Activated B cell treated with CpG ODN at 0.5 μM for 24 hours (primary cell): ENCODE measurements at regions of chr1 and their contacts with region 1.

Region 1: DNA sequence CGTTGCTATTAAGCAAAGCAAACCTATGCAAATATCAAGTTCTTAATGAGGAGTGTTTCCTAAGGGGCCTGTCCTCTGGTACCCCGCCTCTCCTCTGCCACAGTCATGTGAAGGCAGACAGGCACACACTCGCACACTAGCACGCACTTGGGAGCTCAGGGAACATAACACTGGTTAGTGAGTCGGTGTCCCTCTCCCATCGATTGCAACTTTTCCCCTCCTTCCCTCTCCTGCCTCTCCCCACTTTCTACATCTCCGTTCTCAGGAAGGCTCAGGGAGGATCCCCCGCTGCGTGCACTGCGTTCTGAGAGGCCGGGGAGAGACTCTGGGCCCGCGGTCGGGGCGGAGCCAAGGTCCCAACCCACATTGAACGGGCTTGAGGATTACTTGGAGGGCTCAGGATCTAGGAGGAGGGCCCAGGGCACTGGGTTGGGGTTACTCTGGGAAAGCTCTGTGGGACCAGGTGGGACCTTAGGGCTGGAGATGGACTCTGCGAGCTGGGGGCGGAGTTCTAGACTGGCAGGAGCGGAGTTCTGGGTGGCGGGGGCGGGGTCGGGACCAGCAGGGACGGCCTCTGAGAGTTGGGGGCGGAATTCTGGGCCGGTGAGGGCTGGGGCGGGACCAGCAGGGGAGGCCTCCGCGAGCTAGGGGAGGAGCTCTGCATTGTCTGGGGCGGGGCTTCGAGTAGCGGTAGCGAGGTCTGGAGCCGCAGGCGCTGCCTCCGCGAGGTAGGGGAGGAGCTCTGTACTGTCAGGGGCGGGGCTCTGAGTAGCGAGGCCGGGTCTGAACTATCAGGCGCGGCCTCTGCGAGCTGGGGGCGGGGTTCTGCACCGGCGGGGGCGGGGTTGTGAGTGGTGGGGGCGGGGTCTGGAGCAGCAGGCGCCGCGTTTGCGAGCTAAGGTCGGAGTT is 533 bp upstream of the LEPR start:
- DNase-seq: peak; percentile 94
- ATAC-seq: peak; percentile 92
- H3K4me3 Mint-ChIP-seq: no peak overlapping the region
- H3K27ac Mint-ChIP-seq: peak overlapping the region; percentile 91
- H3K4me1 Mint-ChIP-seq: peaks cover 11% of the 10 kb centered on the region
- H3K27me3 Mint-ChIP-seq: peaks cover 9% of the 10 kb centered on the region
- CTCF ChIP-seq: no peak

Region 2: GRCh38 chr1:63593303-63593885 is 1826.5 kb before region 1 on chr1 and contains the start of gene PGM1:
- CTCF ChIA-PET with region 1: no interaction called
- POLR2A ChIA-PET with region 1: no interaction called
- intact Hi-C with region 1: loop called (anchors 5 kb)
- DNase-seq: peak; percentile 67
- ATAC-seq: peak; percentile 79
- H3K4me3 Mint-ChIP-seq: peak within 1 kb of the TSS; percentile 97
- H3K27ac Mint-ChIP-seq: peak within 1 kb of the TSS; percentile 92
- H3K4me1 Mint-ChIP-seq: peaks cover 14% of the 10 kb centered on the region
- H3K27me3 Mint-ChIP-seq: no peaks in the 10 kb centered on the region
- CTCF ChIP-seq: no peak
- total RNA-seq, gene PGM1: 20.6 and 20.8 TPM in 2 replicates

Region 3: DNA sequence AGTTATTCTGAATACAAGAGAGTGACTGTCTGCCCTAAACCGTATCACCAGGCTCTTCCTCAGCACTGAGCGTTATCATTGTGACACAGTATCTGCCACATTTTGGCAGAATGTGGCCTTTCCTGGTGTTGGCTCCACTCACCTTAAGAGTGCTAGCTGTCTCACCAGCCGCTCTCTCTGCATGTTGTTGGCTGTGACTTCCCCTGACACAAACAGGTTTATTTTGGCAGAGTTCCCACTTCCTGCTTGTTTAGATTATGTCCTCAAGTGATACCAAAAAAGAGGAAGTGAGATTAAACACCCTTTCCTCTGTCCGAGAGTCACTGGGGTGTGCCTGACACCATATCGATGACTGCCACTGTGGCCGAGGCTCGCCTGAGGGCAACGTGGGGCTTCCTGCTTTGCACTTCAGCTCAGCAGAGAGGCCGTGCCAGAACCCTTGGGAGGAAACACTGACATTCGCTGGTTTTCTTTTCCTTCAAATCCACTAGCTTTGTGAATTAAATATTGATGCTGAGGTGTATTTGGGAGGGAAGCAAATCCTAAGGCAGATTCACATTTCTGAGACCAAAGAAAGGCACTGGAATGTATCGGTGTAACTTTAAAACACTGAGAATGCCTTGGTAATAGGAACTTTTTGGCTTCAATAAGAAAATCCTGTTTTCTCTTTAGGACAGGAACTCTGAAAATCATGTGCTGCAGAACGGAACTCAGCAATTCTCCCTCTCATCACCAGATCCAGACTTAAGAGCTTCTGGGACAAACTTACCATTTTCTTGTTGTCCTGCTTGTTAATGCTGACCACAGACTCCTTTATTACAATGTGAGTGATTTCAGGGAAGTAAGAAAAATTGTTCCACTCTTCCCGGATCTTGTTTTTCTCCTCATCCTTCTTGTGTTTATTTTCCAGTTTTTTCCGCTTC is 555.7 kb before region 1 on chr1:
- CTCF ChIA-PET with region 1: no interaction called
- POLR2A ChIA-PET with region 1: no interaction called
- intact Hi-C with region 1: loop called (anchors 10 kb)
- DNase-seq: peak; percentile 58
- ATAC-seq: peak; percentile 93
- H3K4me3 Mint-ChIP-seq: peak overlapping the region; percentile 69
- H3K27ac Mint-ChIP-seq: peak overlapping the region; percentile 89
- H3K4me1 Mint-ChIP-seq: peaks cover 73% of the 10 kb centered on the region
- H3K27me3 Mint-ChIP-seq: no peaks in the 10 kb centered on the region
- CTCF ChIP-seq: no peak

Region 4: DNA sequence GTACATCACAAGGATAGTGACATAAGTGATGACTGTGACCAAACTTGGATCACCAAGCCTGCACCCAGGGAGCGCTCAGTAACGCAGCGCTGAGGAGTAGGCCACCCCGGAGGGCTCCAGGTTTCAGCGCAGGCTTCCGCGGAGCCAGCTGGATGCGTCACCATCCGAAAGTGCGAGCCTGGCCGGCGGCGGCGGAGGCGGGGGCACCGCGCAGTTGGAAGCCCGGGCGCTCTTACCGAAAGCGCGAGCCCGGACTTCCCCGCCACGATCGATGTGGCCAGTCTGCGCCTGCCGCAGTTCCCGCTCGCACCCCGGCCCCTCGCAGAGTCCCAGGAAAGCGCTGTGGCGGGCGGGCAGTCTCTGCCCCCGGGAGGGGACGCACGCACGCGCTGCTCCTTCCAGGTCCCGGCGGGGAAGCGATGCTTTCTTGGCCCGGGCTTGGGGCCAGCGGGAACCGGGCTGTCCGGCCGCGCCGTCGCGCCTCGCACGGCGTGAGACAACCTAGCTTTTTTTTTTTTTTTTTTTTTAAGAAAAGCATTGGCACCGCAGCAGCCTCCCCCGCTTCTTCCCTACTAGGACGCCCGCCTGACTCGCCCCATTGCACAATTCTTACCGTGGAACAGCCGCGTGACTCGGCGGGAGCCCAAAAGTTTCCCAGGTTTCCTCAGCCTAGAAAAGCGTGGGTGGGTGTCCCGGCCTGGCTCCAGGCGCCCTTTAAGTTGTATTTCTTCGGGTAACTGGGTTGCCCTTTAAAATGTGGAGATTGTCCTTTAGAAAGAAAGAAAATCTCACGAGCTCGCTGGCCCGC is 417.2 kb before region 1 on chr1:
- CTCF ChIA-PET with region 1: no interaction called
- POLR2A ChIA-PET with region 1: no interaction called
- intact Hi-C with region 1: loop called (anchors 1 kb)
- DNase-seq: peak; percentile 66
- ATAC-seq: peak; percentile 81
- H3K4me3 Mint-ChIP-seq: peak overlapping the region; percentile 83
- H3K27ac Mint-ChIP-seq: peak overlapping the region; percentile 19
- H3K4me1 Mint-ChIP-seq: peaks cover 31% of the 10 kb centered on the region
- H3K27me3 Mint-ChIP-seq: no peaks in the 10 kb centered on the region
- CTCF ChIP-seq: no peak

Region 5: DNA sequence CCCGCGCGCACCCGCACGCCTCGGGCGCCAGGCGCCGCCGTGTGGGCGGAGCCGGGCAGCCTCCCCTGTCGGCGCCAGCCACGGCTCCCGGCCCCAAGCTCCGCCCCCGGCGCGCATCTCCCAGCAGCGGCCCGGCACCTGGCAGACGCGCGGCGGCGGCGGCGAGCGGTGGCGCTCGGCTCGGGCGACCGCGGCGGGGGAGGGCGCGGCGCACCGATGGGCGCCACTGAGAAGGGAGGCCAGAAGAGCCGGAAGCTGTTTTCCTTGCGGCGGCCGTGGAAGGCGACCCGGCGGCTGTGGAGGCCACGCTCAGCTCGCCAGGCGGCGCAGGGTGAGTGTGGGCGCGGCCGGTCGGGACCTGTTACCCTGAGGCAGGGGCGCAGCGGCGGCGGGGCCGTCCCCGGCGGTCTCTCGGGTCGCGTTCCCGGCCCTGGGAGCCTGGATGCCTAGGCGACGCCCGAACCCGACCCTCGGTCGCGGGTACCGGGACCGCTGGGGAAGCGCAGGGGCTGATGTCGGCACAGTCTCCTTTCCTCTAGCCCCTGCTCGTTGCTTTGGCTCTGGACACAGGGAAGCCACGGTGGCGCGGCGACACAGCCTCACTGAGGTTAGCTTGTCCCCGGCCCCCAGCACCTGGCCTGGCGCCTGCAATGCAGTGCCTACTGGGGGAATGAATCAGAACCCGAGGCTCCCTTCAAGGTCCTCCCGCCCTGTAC is 165.5 kb before region 1 on chr1:
- CTCF ChIA-PET with region 1: no interaction called
- POLR2A ChIA-PET with region 1: interaction called, 4 read pairs
- intact Hi-C with region 1: loop called (anchors 1 kb)
- DNase-seq: peak; percentile 81
- ATAC-seq: peak; percentile 97
- H3K4me3 Mint-ChIP-seq: peak overlapping the region; percentile 83
- H3K27ac Mint-ChIP-seq: no peak overlapping the region
- H3K4me1 Mint-ChIP-seq: peaks cover 12% of the 10 kb centered on the region
- H3K27me3 Mint-ChIP-seq: peaks cover 18% of the 10 kb centered on the region
- CTCF ChIP-seq: no peak

Region 6: DNA sequence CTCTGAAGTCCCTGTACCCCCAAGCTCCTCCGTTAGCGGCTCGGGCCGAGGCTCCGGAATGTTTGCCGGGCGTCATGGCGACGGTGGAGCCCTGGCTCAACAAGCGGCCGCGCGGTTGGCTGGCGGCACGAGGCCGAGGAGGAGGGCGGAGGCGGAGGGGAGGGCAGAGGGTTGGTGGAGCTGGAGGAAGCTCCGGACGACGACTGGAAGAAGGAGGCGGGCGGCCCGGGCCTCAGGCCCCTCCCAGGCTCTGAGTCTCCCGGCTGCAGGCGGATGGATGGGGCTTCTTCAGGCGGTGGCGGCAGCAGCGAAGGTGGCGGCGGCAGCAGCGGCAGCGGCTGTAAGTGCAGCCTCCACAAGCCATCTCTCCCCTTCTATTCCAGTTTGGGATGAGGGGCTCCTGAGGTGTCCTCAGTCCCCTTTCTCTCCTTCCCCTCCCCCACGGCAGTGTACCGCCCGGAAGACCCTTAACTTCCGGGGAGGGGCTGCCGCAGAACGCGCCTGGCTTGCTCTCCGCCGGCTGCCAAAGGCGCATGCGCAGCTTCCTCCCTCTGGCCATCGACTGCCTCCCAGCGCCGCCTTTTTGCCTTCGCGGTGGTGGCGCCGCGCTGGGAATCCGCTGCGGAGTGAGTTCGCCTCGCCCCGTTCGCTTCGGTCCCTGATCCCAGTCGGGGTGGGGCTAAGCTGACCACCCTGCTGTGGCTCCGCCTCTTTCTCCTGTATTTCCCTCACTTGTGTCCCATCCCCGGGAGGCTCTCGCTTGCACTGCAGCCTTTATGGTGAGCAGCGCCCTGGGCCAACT is 1505.0 kb after region 1 on chr1 and contains the starts of genes DNAI4 and MIER1:
- CTCF ChIA-PET with region 1: no interaction called
- POLR2A ChIA-PET with region 1: interaction called, 7 read pairs
- intact Hi-C with region 1: loop called (anchors 2 kb)
- DNase-seq: peak; percentile 95
- ATAC-seq: peak; percentile 94
- H3K4me3 Mint-ChIP-seq: peak within 1 kb of the TSS; percentile 93
- H3K27ac Mint-ChIP-seq: peak within 1 kb of the TSS; percentile 95
- H3K4me1 Mint-ChIP-seq: peaks cover 30% of the 10 kb centered on the region
- H3K27me3 Mint-ChIP-seq: no peaks in the 10 kb centered on the region
- CTCF ChIP-seq: no peak
- total RNA-seq, gene DNAI4: 0.75 and 3.4 TPM in 2 replicates
- total RNA-seq, gene MIER1: 39.1 and 39.2 TPM in 2 replicates

Region 7: GRCh38 chr1:67339623-67340343 is 1919.8 kb after region 1 on chr1:
- CTCF ChIA-PET with region 1: no interaction called
- POLR2A ChIA-PET with region 1: no interaction called
- intact Hi-C with region 1: loop called (anchors 2 kb)
- DNase-seq: no peak
- ATAC-seq: peak; percentile 51
- H3K4me3 Mint-ChIP-seq: peak overlapping the region; percentile 62
- H3K27ac Mint-ChIP-seq: peak overlapping the region; percentile 77
- H3K4me1 Mint-ChIP-seq: peaks cover 74% of the 10 kb centered on the region
- H3K27me3 Mint-ChIP-seq: no peaks in the 10 kb centered on the region
- CTCF ChIP-seq: no peak